Activated naive CD4-positive, alpha-beta T cell treated with anti-CD3 and anti-CD28 coated beads for 36 hours (primary cell): ENCODE measurements at regions of chr10 and their contacts with region 1.

Region 1: DNA sequence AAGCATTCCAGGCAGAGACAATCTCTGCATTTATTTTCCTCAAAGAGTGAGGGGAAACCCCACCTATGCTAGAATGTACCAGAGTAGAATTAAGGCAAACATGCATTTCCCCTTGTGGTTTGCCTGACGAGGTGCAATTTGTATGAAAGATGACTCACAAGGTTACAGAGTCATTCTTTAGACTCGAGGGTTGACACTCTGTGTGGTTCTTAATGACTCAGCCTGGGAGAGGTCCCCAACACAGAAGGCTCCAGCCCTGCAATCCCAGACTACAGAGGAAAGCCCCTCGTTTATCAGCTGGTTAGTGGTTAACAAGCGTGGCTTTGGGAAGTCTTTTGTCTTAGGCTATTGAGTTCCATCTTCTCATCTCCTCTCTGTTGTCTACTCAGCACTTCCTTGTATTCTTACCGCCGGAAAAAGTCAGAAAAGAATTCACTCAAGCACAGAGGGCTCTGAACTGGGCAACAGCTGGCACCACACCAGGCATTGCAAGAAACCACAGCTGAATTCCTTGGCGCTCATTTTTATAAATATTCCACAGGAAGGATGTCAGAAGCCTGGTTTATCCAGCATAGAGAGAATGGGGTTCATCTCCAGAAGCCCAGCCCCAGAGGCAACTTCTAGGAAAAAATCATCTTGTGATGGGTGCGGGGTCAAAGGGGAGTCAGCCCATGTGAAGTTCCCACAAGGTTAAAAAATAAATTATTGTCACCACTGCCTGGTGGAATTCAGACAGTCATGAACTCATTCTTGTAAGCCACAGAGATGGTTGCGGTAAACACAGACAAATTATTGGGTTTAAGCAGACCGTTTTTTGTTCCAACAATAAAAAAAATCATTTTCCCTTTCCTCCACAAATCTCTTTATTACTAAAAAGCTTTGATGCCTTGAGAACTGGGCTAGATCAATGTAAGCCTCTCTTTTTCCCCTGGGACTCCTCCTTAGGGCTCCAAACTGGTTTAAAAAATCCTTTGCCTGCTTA is 24.5 kb upstream of the SVIL start:
- DNase-seq: peak; percentile 83
- H3K4me3 Mint-ChIP-seq: no peak overlapping the region
- H3K27ac Mint-ChIP-seq: peak overlapping the region; percentile 51
- H3K4me1 Mint-ChIP-seq: peaks cover 34% of the 10 kb centered on the region
- H3K27me3 Mint-ChIP-seq: no peaks in the 10 kb centered on the region

Region 2: DNA sequence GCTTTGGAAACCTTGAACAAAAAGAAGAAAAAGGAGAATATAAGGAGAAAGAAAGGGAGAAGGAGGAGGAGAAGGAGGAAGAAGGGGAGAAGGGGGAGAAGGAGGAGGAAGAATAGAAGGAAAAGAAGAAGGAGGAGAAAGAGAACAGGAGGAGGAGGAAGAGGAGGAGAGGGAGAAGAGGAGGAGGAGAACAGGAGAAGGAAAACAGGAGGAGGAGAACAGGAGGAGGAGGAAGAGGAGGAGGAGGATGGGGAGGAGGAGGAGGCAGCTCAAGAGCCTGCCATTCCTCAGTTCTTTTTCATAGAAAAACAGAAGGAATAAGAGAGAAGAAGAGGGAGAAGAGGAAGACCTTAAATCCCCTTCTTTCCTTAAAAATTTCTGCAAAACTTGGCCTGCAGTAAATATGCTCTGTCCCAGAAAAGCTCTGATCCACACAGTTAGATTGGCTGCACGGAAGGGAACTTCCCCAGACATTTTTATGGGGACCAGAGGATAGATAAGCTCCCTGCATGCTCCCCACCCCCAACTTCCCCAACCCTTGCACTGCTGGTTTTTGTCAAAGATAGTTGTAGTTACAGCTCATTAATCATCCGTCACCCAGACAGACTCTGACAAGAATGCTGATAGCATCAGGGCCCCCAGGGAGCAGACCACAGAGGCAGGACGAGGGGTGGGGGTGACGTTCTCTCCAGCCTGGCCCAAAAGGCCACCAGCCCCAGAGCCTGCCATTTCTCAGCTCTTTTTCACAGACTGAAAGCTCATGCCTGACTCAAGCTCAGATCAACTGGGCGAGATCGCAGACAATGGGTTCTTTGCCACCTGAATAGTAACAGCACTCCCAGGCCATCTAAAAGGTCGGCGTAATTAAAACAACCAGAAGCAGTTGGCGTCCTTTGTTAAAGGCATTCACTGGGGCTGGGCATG is 404.9 kb before region 1 on chr10:
- CTCF ChIA-PET with region 1: no interaction called
- intact Hi-C with region 1: no loop called
- DNase-seq: no peak
- H3K4me3 Mint-ChIP-seq: no peak overlapping the region
- H3K27ac Mint-ChIP-seq: no peak overlapping the region
- H3K4me1 Mint-ChIP-seq: no peaks in the 10 kb centered on the region
- H3K27me3 Mint-ChIP-seq: peaks cover 32% of the 10 kb centered on the region

Region 3: GRCh38 chr10:29590915-29591650 is 68.2 kb before region 1 on chr10:
- CTCF ChIA-PET with region 1: no interaction called
- intact Hi-C with region 1: loop called (anchors 2 kb)
- DNase-seq: no peak
- H3K4me3 Mint-ChIP-seq: no peak overlapping the region
- H3K27ac Mint-ChIP-seq: no peak overlapping the region
- H3K4me1 Mint-ChIP-seq: peaks cover 8% of the 10 kb centered on the region
- H3K27me3 Mint-ChIP-seq: no peaks in the 10 kb centered on the region

Region 4: DNA sequence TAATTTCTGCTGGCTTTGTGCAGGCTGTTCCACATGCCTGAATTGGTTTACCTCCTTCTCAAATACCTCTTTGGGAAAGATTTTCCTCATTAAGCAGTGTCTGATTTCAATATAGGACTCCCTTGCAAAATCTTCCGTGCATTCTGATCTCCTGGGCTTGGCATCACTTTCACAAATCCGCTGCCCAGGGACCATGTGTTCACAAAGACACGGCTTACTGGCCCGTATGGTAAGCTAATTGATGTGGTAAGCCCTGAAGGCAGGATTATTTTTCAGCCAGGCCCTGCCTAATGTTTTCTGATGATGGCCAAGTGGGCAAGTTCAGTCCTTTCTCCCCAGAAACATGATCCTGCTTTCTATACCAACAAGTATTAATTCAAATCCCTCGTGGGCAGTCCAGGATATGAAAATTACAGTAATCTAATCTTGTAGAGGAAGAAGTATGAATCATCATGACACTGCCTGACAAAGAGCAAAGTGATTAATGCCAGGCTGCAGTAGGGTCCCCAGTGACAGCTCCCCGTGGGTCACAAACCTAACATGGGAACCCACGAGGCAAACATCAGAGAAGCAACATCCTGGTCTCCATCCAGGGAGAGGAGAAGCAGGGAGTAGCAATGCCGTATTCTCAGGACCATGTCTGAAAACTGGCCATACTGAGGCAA is 12.9 kb before region 1 on chr10:
- CTCF ChIA-PET with region 1: interaction called, 3 read pairs
- intact Hi-C with region 1: loop called (anchors 1 kb)
- DNase-seq: peak; percentile 47
- H3K4me3 Mint-ChIP-seq: no peak overlapping the region
- H3K27ac Mint-ChIP-seq: no peak overlapping the region
- H3K4me1 Mint-ChIP-seq: peaks cover 35% of the 10 kb centered on the region
- H3K27me3 Mint-ChIP-seq: peaks cover 3% of the 10 kb centered on the region

Region 5: GRCh38 chr10:29702273-29703164 is 43.2 kb after region 1 on chr10:
- CTCF ChIA-PET with region 1: no interaction called
- intact Hi-C with region 1: loop called (anchors 1 kb)
- DNase-seq: peak; percentile 11
- H3K4me3 Mint-ChIP-seq: peak overlapping the region; percentile 40
- H3K27ac Mint-ChIP-seq: no peak overlapping the region
- H3K4me1 Mint-ChIP-seq: peaks cover 40% of the 10 kb centered on the region
- H3K27me3 Mint-ChIP-seq: no peaks in the 10 kb centered on the region

Region 6: DNA sequence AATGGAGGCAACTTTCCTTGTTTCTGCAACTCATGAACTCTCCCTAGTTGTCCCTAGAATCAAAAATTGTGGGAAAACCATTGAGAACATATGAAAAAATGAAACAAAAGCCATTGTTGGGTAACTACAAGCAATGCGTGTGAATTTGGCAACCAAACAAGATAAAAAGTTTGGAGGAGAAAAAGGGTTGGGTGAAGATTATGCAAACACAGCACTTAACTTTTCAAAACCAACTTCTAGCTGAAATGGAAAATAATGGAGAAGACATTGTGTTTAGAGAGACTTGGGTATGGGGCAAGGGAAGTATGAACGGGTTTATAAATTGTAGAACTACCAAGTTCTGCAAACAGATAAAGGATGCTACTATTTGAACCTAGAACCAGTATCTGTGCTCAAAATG is 64.5 kb after region 1 on chr10:
- CTCF ChIA-PET with region 1: no interaction called
- intact Hi-C with region 1: no loop called
- DNase-seq: no peak
- H3K4me3 Mint-ChIP-seq: no peak overlapping the region
- H3K27ac Mint-ChIP-seq: no peak overlapping the region
- H3K4me1 Mint-ChIP-seq: peaks cover 38% of the 10 kb centered on the region
- H3K27me3 Mint-ChIP-seq: no peaks in the 10 kb centered on the region

Region 7: DNA sequence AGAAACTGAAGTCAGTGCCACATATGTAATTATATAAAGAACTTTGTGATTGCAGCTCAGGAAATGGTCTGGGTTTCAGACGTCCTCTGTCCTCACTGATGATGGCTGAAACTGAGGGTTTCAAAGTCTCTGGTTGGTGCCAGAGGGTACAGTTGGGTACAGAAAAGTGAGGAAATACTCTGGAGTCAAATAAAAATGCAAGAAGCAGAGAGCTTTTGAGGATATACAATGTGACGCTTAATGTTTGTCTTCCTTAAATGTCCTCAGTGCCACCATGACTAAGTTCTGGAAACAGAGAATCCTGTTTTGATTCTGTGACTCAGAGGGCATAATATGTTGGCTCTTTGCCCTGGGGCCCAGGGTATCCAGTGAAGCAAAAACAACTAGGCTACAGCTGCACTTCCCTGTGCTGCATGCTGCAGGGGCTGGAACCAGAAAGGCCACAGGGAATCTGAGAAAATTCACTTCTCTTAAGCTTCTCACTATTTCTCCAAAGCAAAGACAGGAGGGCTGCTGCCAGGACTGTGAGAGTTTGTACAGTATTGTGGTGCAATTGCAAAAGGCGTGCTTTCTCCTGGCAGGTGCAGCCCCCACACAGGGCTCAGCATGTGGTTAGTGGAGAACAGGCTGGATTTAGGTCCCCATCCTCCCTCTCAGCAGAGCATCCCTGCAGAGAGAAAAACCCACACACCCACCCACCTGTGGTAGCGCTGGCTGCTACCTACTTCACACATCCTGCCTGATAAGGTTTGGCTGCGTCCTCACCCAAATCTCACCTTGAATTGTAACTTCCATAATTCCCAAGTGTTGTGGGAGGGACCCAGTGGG is 145.0 kb after region 1 on chr10:
- CTCF ChIA-PET with region 1: no interaction called
- intact Hi-C with region 1: loop called (anchors 2 kb)
- DNase-seq: peak; percentile 41
- H3K4me3 Mint-ChIP-seq: no peak overlapping the region
- H3K27ac Mint-ChIP-seq: no peak overlapping the region
- H3K4me1 Mint-ChIP-seq: peaks cover 8% of the 10 kb centered on the region
- H3K27me3 Mint-ChIP-seq: peaks cover 10% of the 10 kb centered on the region